Breast epithelium (tissue), 4 donors: ENCODE measurements at regions of chr7 and their contacts with region 1.

Region 1: DNA sequence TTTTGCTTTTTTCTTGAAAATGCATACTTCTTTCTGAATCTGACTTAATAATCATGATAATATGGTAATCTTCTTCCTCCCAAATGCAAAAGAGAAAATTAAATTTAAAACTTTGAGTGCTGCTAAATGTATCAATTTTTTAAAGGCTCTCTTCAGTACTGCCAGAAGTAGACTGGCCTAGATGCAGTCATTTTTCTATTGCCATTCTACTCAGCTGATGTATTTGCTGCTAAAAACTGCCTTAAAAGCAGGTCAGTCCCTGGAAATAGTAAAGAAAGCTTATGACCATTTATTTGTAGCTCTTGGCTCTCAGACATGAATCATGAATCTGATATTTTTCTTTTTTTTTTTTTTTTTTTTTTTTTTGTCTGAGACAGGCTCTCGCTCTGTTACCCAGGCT is 28.5 kb downstream of the NAPEPLD start:
- DNase-seq: no peak
- H3K4me3 ChIP-seq: no peak overlapping the region
- H3K27ac ChIP-seq: no peak overlapping the region
- H3K4me1 ChIP-seq: no peaks in the 10 kb centered on the region
- H3K27me3 ChIP-seq: no peaks in the 10 kb centered on the region
- CTCF ChIP-seq: no peak
- POLR2A ChIP-seq: no peak

Region 2: GRCh38 chr7:102897856-102898531 is 222.4 kb before region 1 on chr7:
- intact Hi-C with region 1: loop called (anchors 5 kb)
- DNase-seq: no peak
- H3K4me3 ChIP-seq: no peak overlapping the region
- H3K27ac ChIP-seq: no peak overlapping the region
- H3K4me1 ChIP-seq: no peaks in the 10 kb centered on the region
- H3K27me3 ChIP-seq: no peaks in the 10 kb centered on the region
- CTCF ChIP-seq: no peak
- POLR2A ChIP-seq: no peak